Activated CD4-positive, alpha-beta T cell treated with anti-CD3 and anti-CD28 coated beads for 36 hours (primary cell): ENCODE measurements at regions of chr15 and their contacts with region 1.

Region 1: DNA sequence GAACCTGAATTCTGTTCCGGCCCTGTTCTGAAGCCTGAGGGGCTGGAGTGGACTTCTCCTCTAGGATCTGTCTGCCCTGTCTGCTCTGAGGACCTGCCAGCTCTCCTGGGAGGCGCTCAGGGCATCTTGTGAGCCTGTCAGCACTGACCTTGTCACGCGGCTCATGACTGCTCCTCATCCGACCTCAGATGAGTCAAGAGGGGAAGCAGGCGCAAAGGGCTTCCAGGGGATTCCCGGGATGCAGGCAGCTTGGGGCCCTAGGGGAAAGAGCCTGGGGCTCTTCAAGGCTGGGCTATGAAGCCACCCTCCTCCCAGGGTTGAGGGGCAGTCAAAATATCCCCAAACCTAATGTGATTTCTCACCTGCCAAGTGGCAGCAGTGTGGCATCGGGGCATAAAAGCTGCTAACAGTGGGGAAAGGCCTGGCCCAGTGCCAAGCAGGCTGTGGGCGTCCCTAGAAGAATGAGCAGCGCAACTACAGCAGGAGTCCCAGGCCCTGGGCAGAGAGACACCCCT is 27.6 kb upstream of the ANKDD1A start:
- DNase-seq: peak; percentile 89
- ATAC-seq: peak; percentile 76
- H3K4me3 Mint-ChIP-seq: peak overlapping the region; percentile 13
- H3K27ac Mint-ChIP-seq: peak overlapping the region; percentile 92
- H3K4me1 Mint-ChIP-seq: peaks cover 32% of the 10 kb centered on the region
- H3K27me3 Mint-ChIP-seq: no peaks in the 10 kb centered on the region

Region 2: DNA sequence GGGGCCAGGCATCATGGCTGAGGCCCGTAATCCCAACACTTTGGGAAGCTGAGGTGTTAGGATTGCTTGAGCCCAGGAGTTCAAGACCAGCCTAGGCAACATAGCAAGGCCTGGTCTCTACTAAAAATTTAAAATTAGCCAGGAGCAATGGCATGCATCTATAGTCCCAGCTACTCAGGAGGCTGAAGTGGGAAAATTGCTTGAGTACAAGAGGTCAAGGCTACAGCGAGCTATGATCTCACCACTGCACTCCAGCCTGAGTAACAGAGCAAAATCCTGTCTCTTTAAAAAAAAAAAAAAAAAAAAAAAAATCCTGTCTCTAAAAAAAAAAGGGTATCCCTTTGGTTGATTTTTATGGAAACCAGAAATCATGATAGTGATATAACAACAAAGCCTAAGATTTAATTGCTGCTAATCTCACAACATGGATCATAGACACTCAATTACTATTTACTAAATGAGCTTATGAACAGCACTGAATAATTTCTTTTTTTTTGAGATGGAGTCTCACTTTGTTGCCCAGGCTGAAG is 514.9 kb before region 1 on chr15:
- CTCF ChIA-PET with region 1: no interaction called
- POLR2A ChIA-PET with region 1: no interaction called
- intact Hi-C with region 1: no loop called
- DNase-seq: no peak
- ATAC-seq: no peak
- H3K4me3 Mint-ChIP-seq: no peak overlapping the region
- H3K27ac Mint-ChIP-seq: no peak overlapping the region
- H3K4me1 Mint-ChIP-seq: no peaks in the 10 kb centered on the region
- H3K27me3 Mint-ChIP-seq: no peaks in the 10 kb centered on the region

Region 3: GRCh38 chr15:64841258-64842095 is 42.6 kb before region 1 on chr15 and contains the start of gene PLEKHO2:
- CTCF ChIA-PET with region 1: interaction called, 3 read pairs
- POLR2A ChIA-PET with region 1: no interaction called
- intact Hi-C with region 1: loop called in 1 of 2 experiments (anchors 1 kb)
- DNase-seq: peak; percentile 94
- ATAC-seq: peak; percentile 73
- H3K4me3 Mint-ChIP-seq: peak within 1 kb of the TSS; percentile 88
- H3K27ac Mint-ChIP-seq: peak within 1 kb of the TSS; percentile 84
- H3K4me1 Mint-ChIP-seq: peaks cover 66% of the 10 kb centered on the region
- H3K27me3 Mint-ChIP-seq: no peaks in the 10 kb centered on the region
- total RNA-seq, gene PLEKHO2: 11.4 to 13.3 TPM

Region 4: GRCh38 chr15:64905119-64905831 is 21.2 kb after region 1 on chr15:
- CTCF ChIA-PET with region 1: interaction called, 3 read pairs
- POLR2A ChIA-PET with region 1: no interaction called
- intact Hi-C with region 1: loop called in 1 of 2 experiments (anchors 1 kb)
- DNase-seq: peak; percentile 91
- ATAC-seq: peak; percentile 87
- H3K4me3 Mint-ChIP-seq: peak overlapping the region; percentile 67
- H3K27ac Mint-ChIP-seq: peak overlapping the region; percentile 87
- H3K4me1 Mint-ChIP-seq: peaks cover 34% of the 10 kb centered on the region
- H3K27me3 Mint-ChIP-seq: peaks cover 6% of the 10 kb centered on the region

Region 5: GRCh38 chr15:64930778-64931371 is 46.8 kb after region 1 on chr15:
- CTCF ChIA-PET with region 1: no interaction called
- POLR2A ChIA-PET with region 1: no interaction called
- intact Hi-C with region 1: no loop called
- DNase-seq: no peak
- ATAC-seq: no peak
- H3K4me3 Mint-ChIP-seq: no peak overlapping the region
- H3K27ac Mint-ChIP-seq: no peak overlapping the region
- H3K4me1 Mint-ChIP-seq: peaks cover 6% of the 10 kb centered on the region
- H3K27me3 Mint-ChIP-seq: no peaks in the 10 kb centered on the region